ENCODE measurements at regions of chr18 and their contacts with region 1.

Region 1: DNA sequence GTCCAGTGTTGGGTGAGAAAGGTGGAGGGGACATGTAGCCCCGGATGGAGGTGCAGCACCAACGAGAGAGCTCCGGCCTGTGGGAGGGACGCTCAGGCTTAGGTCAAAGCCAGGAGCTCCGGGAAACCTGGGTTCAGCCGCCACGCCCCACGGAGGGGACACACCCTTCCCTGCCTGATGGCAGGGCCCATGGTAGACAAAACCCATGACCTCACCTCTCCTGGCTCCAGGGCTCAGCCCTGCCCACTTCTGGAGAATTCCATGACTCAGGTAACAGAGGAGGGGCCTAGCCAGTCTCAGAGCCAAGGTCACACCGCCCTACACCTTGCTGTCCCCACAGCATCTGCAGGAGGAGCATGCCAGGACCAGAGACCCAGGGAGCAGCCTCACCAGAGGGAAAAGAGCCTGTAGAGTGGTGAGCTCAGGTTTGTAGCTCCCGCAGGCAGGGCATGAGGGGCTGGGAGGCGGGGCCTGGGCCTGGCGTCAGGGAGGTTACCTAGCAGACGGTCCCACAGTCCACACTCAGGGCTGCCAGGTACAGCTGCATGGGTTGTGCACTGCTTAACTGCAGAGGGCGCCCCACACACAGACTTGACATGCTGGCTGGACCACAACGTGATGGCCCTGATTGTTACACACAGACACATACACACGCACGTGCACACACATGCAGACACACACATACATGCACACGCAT is 70.8 kb upstream of the SMAD7 start:
- DNase-seq: peak; percentile 85
- H3K4me3 Mint-ChIP-seq: peak overlapping the region; percentile 67
- H3K27ac Mint-ChIP-seq: peak overlapping the region; percentile 81
- H3K4me1 Mint-ChIP-seq: peaks cover 11% of the 10 kb centered on the region
- H3K27me3 Mint-ChIP-seq: no peaks in the 10 kb centered on the region
- CTCF ChIP-seq: peak; percentile 61

Region 2: DNA sequence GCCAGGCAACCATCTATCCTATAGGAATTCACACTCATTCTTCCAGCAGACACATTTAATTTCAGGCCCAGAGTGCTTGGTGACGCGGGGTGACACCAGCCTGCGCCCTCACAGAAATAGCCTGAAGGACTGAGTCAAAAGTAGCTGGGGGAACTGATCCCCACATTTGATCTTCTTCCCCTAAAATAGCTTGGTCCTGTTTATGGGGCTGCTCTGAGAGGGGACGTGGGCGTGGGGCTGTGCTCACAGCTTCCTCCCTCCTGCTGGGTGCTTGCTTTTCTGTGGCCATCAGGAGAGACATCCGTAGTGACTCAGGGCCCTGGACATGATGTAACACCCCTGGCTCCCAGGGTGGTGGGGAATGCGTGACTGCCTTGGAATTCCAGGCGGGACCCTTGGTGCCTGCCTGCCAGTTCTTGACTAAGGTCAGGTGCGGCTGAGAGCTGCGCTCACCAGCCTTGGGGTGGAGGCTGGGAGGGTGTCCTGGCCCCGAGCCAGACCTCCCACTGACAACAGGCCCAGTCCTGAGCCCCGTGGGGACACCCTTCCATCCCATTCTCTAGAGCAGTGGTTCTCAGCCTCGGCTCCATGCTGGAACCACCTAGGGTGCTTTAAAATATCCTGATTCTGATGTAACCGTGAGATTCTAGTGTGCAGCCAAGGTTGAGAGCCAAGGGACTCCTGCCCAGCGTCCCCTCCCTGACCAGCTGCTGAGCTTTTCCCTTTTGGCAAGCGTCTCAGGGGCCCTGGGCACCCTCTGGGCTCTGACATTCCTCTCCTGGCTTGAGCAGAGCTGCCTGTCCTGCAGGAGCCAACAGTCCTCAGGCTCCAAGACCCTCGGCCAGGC is 23.4 kb before region 1 on chr18:
- CTCF ChIA-PET with region 1: interaction called, 7 read pairs
- intact Hi-C with region 1: loop called (anchors 2 kb)
- DNase-seq: peak; percentile 92
- H3K4me3 Mint-ChIP-seq: peak overlapping the region; percentile 50
- H3K27ac Mint-ChIP-seq: peak overlapping the region; percentile 96
- H3K4me1 Mint-ChIP-seq: peaks cover 44% of the 10 kb centered on the region
- H3K27me3 Mint-ChIP-seq: peaks cover 4% of the 10 kb centered on the region
- CTCF ChIP-seq: no peak

Region 3: GRCh38 chr18:49178736-49179135 is 157.2 kb after region 1 on chr18:
- CTCF ChIA-PET with region 1: interaction called, 14 read pairs
- intact Hi-C with region 1: loop called (anchors 2 kb)
- DNase-seq: peak; percentile 42
- H3K4me3 Mint-ChIP-seq: no peak overlapping the region
- H3K27ac Mint-ChIP-seq: no peak overlapping the region
- H3K4me1 Mint-ChIP-seq: peaks cover 12% of the 10 kb centered on the region
- H3K27me3 Mint-ChIP-seq: no peaks in the 10 kb centered on the region
- CTCF ChIP-seq: peak; percentile 70

Region 4: GRCh38 chr18:49238433-49239042 is 217.0 kb after region 1 on chr18:
- CTCF ChIA-PET with region 1: interaction called, 12 read pairs
- intact Hi-C with region 1: loop called (anchors 5 kb)
- DNase-seq: peak; percentile 36
- H3K4me3 Mint-ChIP-seq: no peak overlapping the region
- H3K27ac Mint-ChIP-seq: no peak overlapping the region
- H3K4me1 Mint-ChIP-seq: no peaks in the 10 kb centered on the region
- H3K27me3 Mint-ChIP-seq: no peaks in the 10 kb centered on the region
- CTCF ChIP-seq: peak; percentile 62

Region 5: GRCh38 chr18:49335677-49336076 is 314.1 kb after region 1 on chr18:
- CTCF ChIA-PET with region 1: no interaction called
- intact Hi-C with region 1: no loop called
- DNase-seq: peak; percentile 50
- H3K4me3 Mint-ChIP-seq: no peak overlapping the region
- H3K27ac Mint-ChIP-seq: no peak overlapping the region
- H3K4me1 Mint-ChIP-seq: peaks cover 14% of the 10 kb centered on the region
- H3K27me3 Mint-ChIP-seq: no peaks in the 10 kb centered on the region
- CTCF ChIP-seq: peak; percentile 37

Measured in Calu3 (cell line).